ENCODE measurements at regions of chr6 and their contacts with region 1.

Region 1: DNA sequence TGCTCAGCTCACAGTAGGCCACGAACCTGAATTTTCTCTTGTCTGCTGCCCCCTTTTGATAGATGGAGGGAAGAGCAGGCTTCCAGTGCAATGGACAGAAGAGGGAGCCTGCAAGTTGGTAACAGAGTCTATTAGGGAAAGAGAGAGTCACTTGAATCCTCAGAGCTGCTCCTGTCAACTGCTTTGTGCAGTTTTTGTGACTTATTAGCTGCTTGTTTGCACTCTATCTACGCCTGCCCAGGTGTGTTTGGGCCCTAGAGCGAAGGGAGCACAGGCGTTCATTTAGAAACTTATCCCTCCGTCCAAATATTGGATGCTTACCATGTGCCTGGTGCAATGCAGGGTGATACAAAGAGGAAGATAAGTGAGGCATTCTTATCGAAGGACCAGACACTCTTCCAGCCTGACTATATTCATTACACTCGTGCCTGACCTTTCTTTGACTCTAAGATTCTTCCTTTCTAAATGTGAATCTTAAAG is 11.6 kb upstream of the SLC2A12 start:
- DNase-seq: peak; percentile 76
- CTCF ChIP-seq: peak; percentile 94

Region 2: DNA sequence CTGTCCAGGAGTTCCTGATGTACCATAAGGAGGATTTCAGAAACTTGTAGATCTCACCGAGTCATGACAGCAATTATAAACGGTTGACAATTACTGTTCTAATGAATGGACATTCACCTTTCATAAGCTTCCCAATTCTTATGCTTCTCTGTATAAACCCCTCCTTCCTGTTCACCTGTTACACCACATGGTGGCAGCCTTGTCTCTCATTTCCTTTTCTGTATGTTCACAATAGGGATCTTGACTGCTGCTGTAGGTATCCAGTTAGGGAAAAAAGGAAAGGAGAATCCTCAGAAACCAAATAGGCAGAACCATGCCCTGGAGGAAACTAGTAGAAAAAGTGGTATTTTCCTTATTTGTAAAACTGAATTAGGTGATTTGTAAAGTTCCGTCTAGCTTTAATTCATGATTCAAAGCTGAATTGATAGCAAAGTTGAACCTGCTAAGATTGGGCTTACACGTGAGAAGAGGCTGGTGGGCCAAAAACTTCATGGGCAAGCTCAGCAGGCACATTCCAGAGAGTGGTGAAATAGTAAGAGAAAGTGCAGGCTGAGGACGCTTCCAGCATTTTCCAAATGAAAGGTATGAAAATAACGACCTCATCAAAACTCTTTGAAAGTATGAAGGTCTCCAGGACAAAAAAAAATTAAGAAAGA is 139.9 kb before region 1 on chr6:
- CTCF ChIA-PET with region 1: interaction called, 122 read pairs
- POLR2A ChIA-PET with region 1: no interaction called
- DNase-seq: peak; percentile 54
- CTCF ChIP-seq: peak; percentile 70

Region 3: GRCh38 chr6:133966654-133967329 is 97.2 kb before region 1 on chr6:
- CTCF ChIA-PET with region 1: interaction called, 24 read pairs
- POLR2A ChIA-PET with region 1: no interaction called
- DNase-seq: peak; percentile 27
- CTCF ChIP-seq: no peak

Region 4: GRCh38 chr6:134047673-134048072 is 16.3 kb before region 1 on chr6:
- CTCF ChIA-PET with region 1: interaction called, 47 read pairs
- POLR2A ChIA-PET with region 1: no interaction called
- DNase-seq: no peak
- CTCF ChIP-seq: no peak

Region 5: DNA sequence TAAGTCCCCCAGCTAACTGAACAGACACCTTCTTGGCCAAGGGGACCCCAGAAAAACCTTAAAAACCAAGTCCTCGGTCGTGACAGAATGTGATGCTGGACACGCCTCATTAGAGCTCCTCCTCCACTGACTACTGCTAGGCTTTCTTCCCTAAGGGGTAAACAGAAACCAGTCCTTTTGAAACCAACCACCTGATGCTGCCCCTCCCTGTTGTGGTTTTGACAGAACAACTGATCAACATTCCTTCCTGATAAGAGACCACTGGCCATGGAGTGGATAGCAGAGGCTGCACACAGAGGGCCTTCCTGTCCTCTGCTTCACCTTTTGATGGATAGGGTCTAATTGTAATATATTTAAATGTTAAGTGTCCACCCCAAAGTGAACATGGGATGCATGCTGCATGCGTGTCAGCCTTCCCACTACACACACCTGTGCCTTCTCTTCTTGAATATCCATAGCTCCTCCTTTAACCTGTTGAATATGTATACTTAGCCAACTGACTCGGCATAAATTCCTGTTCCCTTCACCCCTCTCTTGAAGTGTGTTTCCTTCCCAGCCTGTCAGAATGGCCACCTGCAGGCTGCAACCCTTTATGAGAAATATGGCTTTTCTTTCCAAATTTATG is 16.3 kb after region 1 on chr6:
- CTCF ChIA-PET with region 1: interaction called, 46 read pairs
- POLR2A ChIA-PET with region 1: no interaction called
- DNase-seq: no peak
- CTCF ChIP-seq: no peak

Region 6: DNA sequence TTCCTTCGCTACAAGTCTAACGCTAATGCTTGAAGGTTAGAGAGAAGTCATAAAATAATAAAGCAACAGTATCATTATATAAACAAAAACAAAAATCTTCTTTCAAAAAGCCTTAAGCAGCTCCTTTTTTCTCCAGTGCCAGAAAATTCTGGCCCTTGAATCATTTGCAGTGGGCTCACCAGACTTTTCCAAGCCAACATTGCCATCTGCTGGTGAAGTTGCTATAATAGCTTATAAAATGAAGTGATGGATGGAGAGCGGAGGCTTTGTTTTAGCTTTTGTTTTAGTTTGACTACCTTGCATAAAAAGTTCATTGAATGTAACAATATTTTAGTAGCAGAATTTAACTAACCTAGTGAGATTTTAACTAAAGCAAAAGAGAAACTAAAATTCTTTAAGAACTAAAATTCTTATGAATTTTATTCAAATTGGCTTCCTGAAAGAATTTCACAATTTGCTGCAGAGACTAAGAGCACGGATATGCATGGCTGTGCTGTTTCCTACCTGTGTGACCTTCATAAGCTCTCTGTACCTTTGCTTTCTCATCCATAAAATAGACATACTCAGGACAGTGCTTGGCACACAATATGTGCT is 33.2 kb after region 1 on chr6:
- CTCF ChIA-PET with region 1: interaction called, 30 read pairs
- POLR2A ChIA-PET with region 1: no interaction called
- DNase-seq: peak; percentile 62
- CTCF ChIP-seq: peak; percentile 55

Measured in GM10248 (cell line).